ENCODE measurements at regions of chr1 and their contacts with region 1.

Region 1: GRCh38 chr1:11294951-11295350 is 22.0 kb downstream of the UBIAD1 start:
- DNase-seq: no peak
- H3K4me3 ChIP-seq: no peak overlapping the region
- CTCF ChIP-seq: no peak

Region 2: DNA sequence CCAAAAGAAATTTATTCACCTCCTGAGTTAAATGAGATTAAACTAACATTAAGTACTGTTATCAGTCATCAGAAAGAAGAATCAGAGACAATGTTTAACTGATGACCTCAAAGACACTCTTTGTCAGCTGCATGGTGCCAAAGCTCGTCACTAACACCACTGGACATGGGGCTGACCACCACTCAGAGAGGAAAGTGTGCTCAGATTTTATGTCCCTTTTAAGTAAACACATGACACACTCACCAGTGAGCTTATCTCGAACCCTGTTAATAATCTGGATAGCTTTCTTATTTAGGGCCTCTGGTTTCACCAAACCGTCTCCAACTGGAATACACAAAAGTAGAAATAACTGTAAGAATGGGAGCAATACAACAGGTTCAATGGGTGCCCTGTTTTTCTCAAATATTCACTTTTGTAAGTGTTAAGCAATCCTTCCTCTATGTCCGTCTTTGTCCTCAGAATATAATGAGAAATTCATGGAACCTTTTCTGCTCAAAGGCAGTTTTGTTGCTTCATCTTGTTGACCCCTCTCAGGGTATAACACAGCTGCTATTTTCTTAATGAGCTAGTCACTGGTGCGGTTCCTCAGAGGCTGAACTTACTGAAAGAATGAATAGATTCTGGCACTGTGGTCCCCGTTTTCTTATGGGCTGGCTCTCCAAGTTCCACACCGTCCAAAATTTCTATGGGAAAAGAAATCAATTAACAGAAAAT is 185.7 kb before region 1 on chr1:
- in situ Hi-C with region 1: no loop called
- DNase-seq: no peak
- H3K4me3 ChIP-seq: no peak overlapping the region
- CTCF ChIP-seq: no peak

Region 3: GRCh38 chr1:11337580-11338073 is 42.7 kb after region 1 on chr1:
- in situ Hi-C with region 1: no loop called
- DNase-seq: no peak
- H3K4me3 ChIP-seq: no peak overlapping the region
- CTCF ChIP-seq: peak; percentile 86

Region 4: DNA sequence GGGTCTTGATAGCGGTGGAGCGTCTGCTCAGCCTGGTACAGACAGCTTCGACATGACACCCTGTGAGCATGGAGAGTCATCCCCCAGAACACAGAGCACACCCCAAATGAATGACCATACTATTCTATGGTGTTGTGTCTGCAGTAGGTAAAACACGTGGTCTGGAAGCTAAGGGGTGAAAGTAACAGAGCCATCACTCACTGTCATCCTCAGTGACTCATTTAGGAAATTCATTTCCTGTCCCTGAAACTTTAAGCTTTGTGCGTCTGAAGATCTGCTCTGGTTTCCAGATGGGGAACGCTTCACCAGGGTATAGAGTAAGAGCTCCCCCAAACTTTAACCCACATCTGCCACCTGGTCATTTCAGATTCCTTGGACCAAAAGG is 89.2 kb after region 1 on chr1:
- in situ Hi-C with region 1: loop called (anchors 5 kb)
- DNase-seq: no peak
- H3K4me3 ChIP-seq: no peak overlapping the region
- CTCF ChIP-seq: no peak